Activated B cell treated with CpG ODN at 0.5 μM for 24 hours (primary cell): ENCODE measurements at regions of chr20 and their contacts with region 1.

Region 1: DNA sequence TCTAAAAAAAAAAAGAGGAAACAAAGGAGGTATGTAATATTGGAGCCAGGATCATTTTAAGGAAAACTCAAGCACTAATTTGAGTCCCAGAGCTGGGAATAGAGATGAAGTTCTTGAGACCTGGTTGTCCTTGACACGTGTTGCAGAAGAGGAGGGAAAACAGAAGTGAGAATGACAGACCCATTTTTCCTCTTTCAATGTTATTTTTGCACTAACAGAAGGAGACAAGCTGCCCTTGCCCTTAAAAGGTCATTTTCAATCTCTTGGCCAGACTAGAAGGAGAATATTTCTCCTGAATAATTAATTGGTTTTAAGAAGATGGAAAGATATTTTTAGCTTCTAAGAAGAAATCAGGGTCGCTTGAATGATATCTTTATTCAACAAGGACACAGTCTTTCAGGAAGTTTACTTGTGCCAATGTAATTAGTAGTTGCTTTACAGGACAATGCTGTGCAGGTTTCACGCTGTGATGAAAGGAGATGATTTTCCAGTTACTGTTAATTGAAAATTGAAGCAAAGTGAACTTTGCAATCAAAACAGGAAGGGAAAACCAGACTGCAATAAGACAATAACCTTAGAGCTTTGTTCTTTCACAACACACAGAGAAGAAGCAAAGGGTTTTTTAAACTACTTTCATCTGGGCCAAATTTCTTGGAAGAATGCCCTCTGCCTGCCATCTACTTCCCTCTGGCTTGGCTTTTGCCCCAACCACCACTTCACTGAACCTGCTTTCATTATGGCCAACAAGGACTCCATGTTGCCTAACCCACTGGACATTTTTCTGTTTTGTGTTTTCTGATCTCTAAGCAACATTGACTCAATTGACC is 107.8 kb upstream of the SHLD1 start:
- DNase-seq: no peak
- ATAC-seq: no peak
- H3K4me3 Mint-ChIP-seq: peak overlapping the region; percentile 3
- H3K27ac Mint-ChIP-seq: peak overlapping the region; percentile 50
- H3K4me1 Mint-ChIP-seq: peaks cover 55% of the 10 kb centered on the region
- H3K27me3 Mint-ChIP-seq: no peaks in the 10 kb centered on the region
- CTCF ChIP-seq: no peak

Region 2: DNA sequence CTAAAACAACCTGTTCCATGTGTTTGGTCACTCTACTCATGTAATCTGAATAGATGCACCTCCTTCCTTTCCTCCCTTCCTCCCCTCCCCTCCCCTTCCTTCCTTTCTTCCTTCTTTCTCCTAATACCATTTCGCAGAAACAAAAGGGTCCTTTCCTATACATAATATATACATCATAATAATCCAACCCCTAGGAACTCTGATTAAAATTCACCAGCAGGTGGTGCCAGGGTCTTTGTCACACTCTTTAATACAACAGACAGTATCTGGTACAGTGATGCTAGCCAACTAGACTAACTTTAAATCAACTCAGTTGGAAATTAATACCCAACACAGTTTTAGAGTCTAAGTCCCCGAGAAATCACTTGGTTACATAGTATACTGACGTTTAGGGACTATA is 73.3 kb before region 1 on chr20:
- CTCF ChIA-PET with region 1: no interaction called
- POLR2A ChIA-PET with region 1: interaction called, 8 read pairs
- intact Hi-C with region 1: loop called (anchors 1 kb)
- DNase-seq: no peak
- ATAC-seq: peak; percentile 90
- H3K4me3 Mint-ChIP-seq: no peak overlapping the region
- H3K27ac Mint-ChIP-seq: peak overlapping the region; percentile 43
- H3K4me1 Mint-ChIP-seq: peaks cover 23% of the 10 kb centered on the region
- H3K27me3 Mint-ChIP-seq: no peaks in the 10 kb centered on the region
- CTCF ChIP-seq: peak; percentile 67

Region 3: DNA sequence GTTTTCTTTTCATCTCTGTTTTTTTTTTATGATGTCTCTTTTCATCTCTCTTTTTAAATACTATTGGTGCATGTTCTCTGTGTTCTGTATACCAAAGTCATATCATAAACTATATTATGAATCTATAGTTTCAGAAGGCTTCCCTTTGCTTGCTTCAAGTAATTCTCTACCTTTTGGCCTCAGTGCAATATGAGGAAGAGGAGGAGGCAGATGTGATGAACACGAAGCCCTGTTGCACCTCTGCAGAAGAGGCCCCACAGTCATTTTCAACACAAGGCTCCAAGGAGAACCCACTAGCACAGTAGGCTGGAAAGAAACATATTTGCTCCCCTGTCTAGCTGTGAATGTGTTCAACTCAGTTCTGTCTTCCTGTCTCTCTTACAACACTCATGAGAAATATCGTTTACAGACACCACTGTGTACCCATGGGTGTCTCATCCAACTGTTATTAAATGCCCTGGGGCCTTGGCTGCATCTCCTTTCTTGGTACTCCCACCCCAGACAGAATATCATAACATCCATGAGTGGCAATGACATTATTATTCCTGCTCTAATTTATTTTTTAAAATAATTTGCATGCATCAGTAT is 14.8 kb before region 1 on chr20:
- CTCF ChIA-PET with region 1: no interaction called
- POLR2A ChIA-PET with region 1: no interaction called
- intact Hi-C with region 1: loop called (anchors 2 kb)
- DNase-seq: no peak
- ATAC-seq: no peak
- H3K4me3 Mint-ChIP-seq: no peak overlapping the region
- H3K27ac Mint-ChIP-seq: no peak overlapping the region
- H3K4me1 Mint-ChIP-seq: peaks cover 2% of the 10 kb centered on the region
- H3K27me3 Mint-ChIP-seq: no peaks in the 10 kb centered on the region
- CTCF ChIP-seq: no peak

Region 4: DNA sequence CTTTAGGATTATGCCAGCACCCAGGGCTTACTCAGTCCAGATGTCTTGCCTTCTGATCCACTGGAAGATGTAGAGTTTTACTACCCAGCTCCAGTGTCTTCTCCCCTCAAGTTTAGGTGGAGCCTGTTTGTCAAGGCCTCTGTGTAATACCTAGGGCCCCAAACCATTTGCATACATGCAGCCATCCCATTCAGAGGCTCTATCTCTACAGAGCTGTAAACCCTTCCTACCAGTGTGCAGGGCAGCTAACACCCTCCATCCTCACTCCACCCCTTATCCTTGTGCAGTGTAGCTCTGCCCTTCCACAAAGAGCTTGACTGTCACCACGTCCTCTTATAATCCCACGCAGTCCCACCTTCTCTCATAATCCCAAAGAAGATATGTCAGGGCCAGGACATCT is 23.0 kb after region 1 on chr20:
- CTCF ChIA-PET with region 1: no interaction called
- POLR2A ChIA-PET with region 1: interaction called, 77 read pairs
- intact Hi-C with region 1: no loop called
- DNase-seq: no peak
- ATAC-seq: peak; percentile 58
- H3K4me3 Mint-ChIP-seq: no peak overlapping the region
- H3K27ac Mint-ChIP-seq: no peak overlapping the region
- H3K4me1 Mint-ChIP-seq: peaks cover 27% of the 10 kb centered on the region
- H3K27me3 Mint-ChIP-seq: no peaks in the 10 kb centered on the region
- CTCF ChIP-seq: no peak

Region 5: GRCh38 chr20:5770987-5771318 is 128.6 kb after region 1 on chr20:
- CTCF ChIA-PET with region 1: interaction called, 4 read pairs
- POLR2A ChIA-PET with region 1: interaction called, 4 read pairs
- intact Hi-C with region 1: loop called (anchors 2 kb)
- DNase-seq: no peak
- ATAC-seq: peak; percentile 88
- H3K4me3 Mint-ChIP-seq: peak overlapping the region; percentile 26
- H3K27ac Mint-ChIP-seq: peak overlapping the region; percentile 79
- H3K4me1 Mint-ChIP-seq: peaks cover 79% of the 10 kb centered on the region
- H3K27me3 Mint-ChIP-seq: no peaks in the 10 kb centered on the region
- CTCF ChIP-seq: no peak

Region 6: GRCh38 chr20:6295127-6295866 is 652.9 kb after region 1 on chr20:
- CTCF ChIA-PET with region 1: no interaction called
- POLR2A ChIA-PET with region 1: no interaction called
- intact Hi-C with region 1: no loop called
- DNase-seq: no peak
- ATAC-seq: no peak
- H3K4me3 Mint-ChIP-seq: no peak overlapping the region
- H3K27ac Mint-ChIP-seq: no peak overlapping the region
- H3K4me1 Mint-ChIP-seq: no peaks in the 10 kb centered on the region
- H3K27me3 Mint-ChIP-seq: no peaks in the 10 kb centered on the region
- CTCF ChIP-seq: no peak